ENCODE measurements at regions of chr4 and their contacts with region 1.

Region 1: DNA sequence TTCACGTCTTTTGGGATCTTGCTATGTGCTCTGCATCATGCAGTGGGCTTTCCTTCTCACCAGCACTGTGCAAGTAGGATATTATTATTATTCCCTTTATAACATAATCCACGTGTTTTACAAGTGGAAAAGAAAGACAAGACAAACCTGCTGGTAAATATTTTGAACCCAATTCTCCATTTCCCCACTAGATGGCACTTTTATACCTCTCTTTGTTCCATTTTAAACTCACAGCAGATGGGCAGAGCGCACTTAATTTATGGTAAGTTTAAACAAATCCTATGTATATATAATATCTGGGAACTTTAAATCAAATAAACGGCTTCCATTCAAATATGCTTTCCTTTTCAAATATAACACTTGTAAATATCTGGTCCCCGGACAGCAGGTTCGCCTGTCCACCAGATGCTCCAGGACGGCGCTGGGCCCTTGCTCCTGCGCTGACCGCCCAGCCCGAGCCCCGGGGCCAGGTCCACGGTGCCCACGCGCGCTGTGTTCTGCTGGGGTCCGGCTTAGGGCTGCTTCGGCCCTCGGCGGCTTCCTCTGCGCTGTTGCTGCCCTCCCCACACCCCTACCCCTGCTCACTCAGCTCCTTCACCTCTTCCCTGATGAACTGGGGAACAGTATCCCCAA is 31.1 kb downstream of the F11 start:
- DNase-seq: peak in 1 of 2 experiments; percentile 43
- H3K4me3 ChIP-seq: no peak overlapping the region
- H3K4me3 Mint-ChIP-seq: no peak overlapping the region
- H3K27ac Mint-ChIP-seq: no peak overlapping the region
- H3K4me1 ChIP-seq: no peaks in the 10 kb centered on the region
- H3K4me1 Mint-ChIP-seq: no peaks in the 10 kb centered on the region
- H3K27me3 ChIP-seq: no peaks in the 10 kb centered on the region
- H3K27me3 Mint-ChIP-seq: peaks cover 7% of the 10 kb centered on the region
- CTCF ChIP-seq: peak; percentile 37 to 62

Region 2: DNA sequence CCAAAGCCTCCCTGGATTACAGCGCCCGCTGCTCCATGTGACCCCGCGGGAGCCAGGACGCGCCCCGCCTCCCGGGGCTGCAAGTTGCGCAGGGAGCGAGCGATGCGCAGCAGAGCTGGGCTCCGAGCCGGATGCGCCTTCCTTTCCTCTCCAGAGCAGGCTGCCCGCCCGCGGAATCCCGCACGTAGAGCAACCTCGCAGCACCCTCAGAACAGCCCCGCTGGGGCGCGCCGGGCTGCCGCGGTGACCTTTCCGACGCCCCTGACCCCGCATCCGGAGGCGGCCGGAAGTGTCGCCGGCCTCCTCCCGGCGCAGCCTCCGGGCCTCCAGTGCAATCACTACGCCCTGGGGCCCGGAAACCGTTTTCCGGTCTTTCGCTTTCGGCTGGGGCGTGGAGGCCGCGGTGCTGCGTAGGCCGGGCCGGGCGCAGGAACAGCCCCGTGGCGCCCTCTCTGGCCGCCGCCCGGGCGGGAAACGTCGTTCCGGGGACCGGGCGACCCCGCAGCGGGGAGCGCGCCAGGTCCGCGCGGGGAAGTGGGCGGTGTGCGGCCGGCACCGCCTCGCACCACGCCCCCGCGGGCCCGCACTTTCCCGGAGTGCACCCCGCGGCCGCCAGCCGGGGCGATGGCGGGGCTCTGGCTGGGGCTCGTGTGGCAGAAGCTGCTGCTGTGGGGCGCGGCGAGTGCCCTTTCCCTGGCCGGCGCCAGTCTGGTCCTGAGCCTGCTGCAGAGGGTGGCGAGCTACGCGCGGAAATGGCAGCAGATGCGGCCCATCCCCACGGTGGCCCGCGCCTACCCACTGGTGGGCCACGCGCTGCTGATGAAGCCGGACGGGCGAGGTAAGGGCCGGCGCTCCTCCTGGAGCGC is 105.7 kb before region 1 on chr4 and contains the start of gene CYP4V2:
- CTCF ChIA-PET with region 1: no interaction called
- POLR2A ChIA-PET with region 1: no interaction called
- intact Hi-C with region 1: no loop called
- DNase-seq: peak; percentile 67 to 74
- H3K4me3 ChIP-seq: peak within 1 kb of the TSS; percentile 70
- H3K4me3 Mint-ChIP-seq: peak within 1 kb of the TSS; percentile 80
- H3K27ac Mint-ChIP-seq: no peak within 1 kb of the TSS
- H3K4me1 ChIP-seq: peaks cover 10% of the 10 kb centered on the region; the same call in 1 of the 2 replicates
- H3K4me1 Mint-ChIP-seq: no peaks in the 10 kb centered on the region
- H3K27me3 ChIP-seq: no peaks in the 10 kb centered on the region; the same call in none of the 2 replicates
- H3K27me3 Mint-ChIP-seq: peaks cover 10% of the 10 kb centered on the region
- CTCF ChIP-seq: peak; percentile 16 to 28
- total RNA-seq, gene CYP4V2: 2.1 and 2.7 TPM in 2 replicates

Region 3: GRCh38 chr4:186472948-186473347 is 175.8 kb after region 1 on chr4:
- CTCF ChIA-PET with region 1: no interaction called
- POLR2A ChIA-PET with region 1: no interaction called
- intact Hi-C with region 1: loop called (anchors 5 kb)
- DNase-seq: no peak
- H3K4me3 ChIP-seq: no peak overlapping the region
- H3K4me3 Mint-ChIP-seq: no peak overlapping the region
- H3K27ac Mint-ChIP-seq: no peak overlapping the region
- H3K4me1 ChIP-seq: no peaks in the 10 kb centered on the region
- H3K4me1 Mint-ChIP-seq: no peaks in the 10 kb centered on the region
- H3K27me3 ChIP-seq: no peaks in the 10 kb centered on the region
- H3K27me3 Mint-ChIP-seq: peaks cover 11% of the 10 kb centered on the region
- CTCF ChIP-seq: peak; percentile 30 to 45

Region 4: GRCh38 chr4:186554914-186555827 is 258.0 kb after region 1 on chr4 and contains the start of gene MTNR1A:
- CTCF ChIA-PET with region 1: no interaction called
- POLR2A ChIA-PET with region 1: no interaction called
- intact Hi-C with region 1: loop called (anchors 1 kb)
- DNase-seq: peak in 1 of 2 experiments; percentile 47
- H3K4me3 ChIP-seq: peak within 1 kb of the TSS; percentile 35
- H3K4me3 Mint-ChIP-seq: peak within 1 kb of the TSS; percentile 72
- H3K27ac Mint-ChIP-seq: no peak within 1 kb of the TSS
- H3K4me1 ChIP-seq: no peaks in the 10 kb centered on the region
- H3K4me1 Mint-ChIP-seq: no peaks in the 10 kb centered on the region
- H3K27me3 ChIP-seq: no peaks in the 10 kb centered on the region; the same call in 1 of the 2 replicates
- H3K27me3 Mint-ChIP-seq: peaks cover 28% of the 10 kb centered on the region
- CTCF ChIP-seq: peak; percentile 19 to 27
- total RNA-seq, gene MTNR1A: not detected in 2 replicates

Region 5: DNA sequence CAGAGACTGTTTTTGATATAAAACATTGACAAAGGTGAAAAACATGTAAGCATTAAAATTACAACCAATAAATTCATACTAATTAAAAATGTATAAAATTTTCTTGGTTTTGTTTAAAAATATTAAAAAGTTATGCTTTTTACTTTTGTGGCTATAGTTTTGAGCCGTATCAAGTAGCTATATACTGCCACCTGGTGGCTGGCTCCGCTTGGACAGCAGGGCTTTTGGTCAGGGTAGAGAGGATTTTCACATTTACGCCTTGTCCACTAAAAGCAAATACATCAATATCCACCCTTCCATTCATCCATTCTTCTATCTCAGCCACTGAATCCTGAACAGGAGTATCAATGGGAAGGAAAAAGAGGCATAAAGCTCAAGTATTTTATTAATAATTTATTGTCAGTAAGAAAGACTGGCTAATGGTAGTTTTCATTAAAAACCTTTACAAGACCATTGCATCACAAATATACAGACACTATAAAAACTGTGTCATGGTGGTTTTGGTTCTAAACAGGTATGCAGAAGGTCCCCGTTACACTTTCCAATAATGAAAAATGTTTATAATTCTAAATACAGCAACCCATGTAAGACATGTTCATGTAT is 290.4 kb after region 1 on chr4:
- CTCF ChIA-PET with region 1: interaction called, 3 read pairs
- POLR2A ChIA-PET with region 1: no interaction called
- intact Hi-C with region 1: loop called (anchors 1 kb)
- DNase-seq: peak; percentile 49 to 69
- H3K4me3 ChIP-seq: no peak overlapping the region
- H3K4me3 Mint-ChIP-seq: no peak overlapping the region
- H3K27ac Mint-ChIP-seq: no peak overlapping the region
- H3K4me1 ChIP-seq: no peaks in the 10 kb centered on the region
- H3K4me1 Mint-ChIP-seq: no peaks in the 10 kb centered on the region
- H3K27me3 ChIP-seq: no peaks in the 10 kb centered on the region
- H3K27me3 Mint-ChIP-seq: no peaks in the 10 kb centered on the region
- CTCF ChIP-seq: peak; percentile 73 to 74

Region 6: GRCh38 chr4:186685767-186686183 is 388.6 kb after region 1 on chr4:
- CTCF ChIA-PET with region 1: no interaction called
- POLR2A ChIA-PET with region 1: no interaction called
- intact Hi-C with region 1: no loop called
- DNase-seq: peak in 1 of 2 experiments; percentile 49
- H3K4me3 ChIP-seq: no peak overlapping the region
- H3K4me3 Mint-ChIP-seq: peak overlapping the region; percentile 57
- H3K27ac Mint-ChIP-seq: peak overlapping the region; percentile 87
- H3K4me1 ChIP-seq: peaks cover 83% of the 10 kb centered on the region
- H3K4me1 Mint-ChIP-seq: peaks cover 53% of the 10 kb centered on the region
- H3K27me3 ChIP-seq: no peaks in the 10 kb centered on the region
- H3K27me3 Mint-ChIP-seq: no peaks in the 10 kb centered on the region
- CTCF ChIP-seq: no peak